ENCODE measurements at regions of chr9 and their contacts with region 1.

Region 1: DNA sequence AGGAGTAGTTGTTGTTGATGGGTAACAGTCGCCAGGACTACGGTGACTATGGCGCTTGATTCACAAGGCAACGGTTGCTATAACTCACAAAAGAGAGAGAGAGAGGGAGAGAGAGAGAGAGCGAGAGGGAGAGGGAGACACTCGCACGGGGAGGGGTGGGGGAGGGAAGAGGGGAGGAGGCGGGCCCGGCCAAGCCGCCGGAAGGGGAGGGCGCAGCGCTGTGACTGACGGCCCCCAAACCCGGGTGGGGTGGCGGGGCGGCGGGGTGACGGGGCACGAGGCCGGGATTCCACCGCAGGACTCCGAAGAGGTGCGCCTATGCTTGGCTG is at the start of gene RFX3:
- DNase-seq: peak; percentile 91 to 95 (median 95)
- H3K4me3 ChIP-seq: peak within 1 kb of the TSS; percentile 70 to 93
- H3K4me3 Mint-ChIP-seq: peak within 1 kb of the TSS; percentile 89 to 97 (median 94)
- H3K27ac ChIP-seq: peak within 1 kb of the TSS; percentile 100
- H3K27ac Mint-ChIP-seq: peak within 1 kb of the TSS; percentile 95 to 100 (median 98)
- H3K4me1 ChIP-seq: peaks cover 65% of the 10 kb centered on the region
- H3K4me1 Mint-ChIP-seq: peaks cover 41 to 76% (median 54%) of the 10 kb centered on the region in 4 donors
- H3K27me3 ChIP-seq: no peaks in the 10 kb centered on the region
- H3K27me3 Mint-ChIP-seq: peaks cover 1 to 7% of the 10 kb centered on the region in 2 donors
- total RNA-seq, gene RFX3: 25.9 to 30.8 TPM

Region 2: GRCh38 chr9:2014696-2015580 is 1510.9 kb before region 1 on chr9 and contains the start of gene SMARCA2:
- CTCF ChIA-PET with region 1: no interaction called
- POLR2A ChIA-PET with region 1: interaction called, 26 read pairs
- intact Hi-C with region 1: loop called (anchors 5 kb)
- DNase-seq: peak; percentile 97 to 98 (median 98)
- H3K4me3 ChIP-seq: peak within 1 kb of the TSS; percentile 84 to 98
- H3K4me3 Mint-ChIP-seq: peak within 1 kb of the TSS; percentile 95 to 100 (median 99)
- H3K27ac ChIP-seq: peak within 1 kb of the TSS; percentile 92
- H3K27ac Mint-ChIP-seq: peak within 1 kb of the TSS; percentile 96 to 100 (median 99)
- H3K4me1 ChIP-seq: peaks cover 29% of the 10 kb centered on the region
- H3K4me1 Mint-ChIP-seq: peaks cover 15 to 40% (median 24%) of the 10 kb centered on the region in 4 donors
- H3K27me3 ChIP-seq: no peaks in the 10 kb centered on the region
- H3K27me3 Mint-ChIP-seq: peaks cover 0 to 3% of the 10 kb centered on the region in 2 donors
- total RNA-seq, gene SMARCA2: 227 to 245 TPM

Region 3: GRCh38 chr9:3467593-3468219 is 58.1 kb before region 1 on chr9:
- CTCF ChIA-PET with region 1: interaction called, 5 read pairs
- POLR2A ChIA-PET with region 1: interaction called, 36 read pairs
- intact Hi-C with region 1: loop called (anchors 1 kb)
- DNase-seq: peak; percentile 51 to 70 (median 61)
- H3K4me3 ChIP-seq: no peak overlapping the region
- H3K4me3 Mint-ChIP-seq: peak overlapping the region in 2 of 8 donors; percentile 36 to 41
- H3K27ac ChIP-seq: no peak overlapping the region
- H3K27ac Mint-ChIP-seq: peak overlapping the region in 2 of 7 donors; percentile 27 to 29
- H3K4me1 ChIP-seq: peaks cover 5% of the 10 kb centered on the region
- H3K4me1 Mint-ChIP-seq: peaks cover 4 to 8% (median 5%) of the 10 kb centered on the region in 4 donors
- H3K27me3 ChIP-seq: no peaks in the 10 kb centered on the region
- H3K27me3 Mint-ChIP-seq: no peaks in the 10 kb centered on the region

Region 4: GRCh38 chr9:3508521-3509291 is 17.1 kb before region 1 on chr9:
- CTCF ChIA-PET with region 1: no interaction called
- POLR2A ChIA-PET with region 1: interaction called, 12 read pairs
- intact Hi-C with region 1: loop called (anchors 2 kb)
- DNase-seq: no peak
- H3K4me3 ChIP-seq: no peak overlapping the region
- H3K4me3 Mint-ChIP-seq: peak overlapping the region in 6 of 8 donors; percentile 14 to 55 (median 38)
- H3K27ac ChIP-seq: no peak overlapping the region
- H3K27ac Mint-ChIP-seq: peak overlapping the region in 6 of 7 donors; percentile 0 to 43 (median 24)
- H3K4me1 ChIP-seq: peaks cover 10% of the 10 kb centered on the region
- H3K4me1 Mint-ChIP-seq: peaks cover 31 to 45% (median 36%) of the 10 kb centered on the region in 4 donors
- H3K27me3 ChIP-seq: no peaks in the 10 kb centered on the region
- H3K27me3 Mint-ChIP-seq: no peaks in the 10 kb centered on the region

Region 5: GRCh38 chr9:3732077-3733038 is 206.6 kb after region 1 on chr9:
- CTCF ChIA-PET with region 1: no interaction called
- POLR2A ChIA-PET with region 1: interaction called, 5 read pairs
- intact Hi-C with region 1: loop called (anchors 5 kb)
- DNase-seq: peak in 4 of 5 donors; percentile 38 to 43 (median 39)
- H3K4me3 ChIP-seq: no peak overlapping the region
- H3K4me3 Mint-ChIP-seq: peak overlapping the region in 6 of 8 donors; percentile 3 to 72 (median 42)
- H3K27ac ChIP-seq: no peak overlapping the region
- H3K27ac Mint-ChIP-seq: peak overlapping the region in 4 of 7 donors; percentile 49 to 76 (median 55)
- H3K4me1 ChIP-seq: peaks cover 10% of the 10 kb centered on the region
- H3K4me1 Mint-ChIP-seq: peaks cover 5 to 13% (median 12%) of the 10 kb centered on the region in 4 donors
- H3K27me3 ChIP-seq: no peaks in the 10 kb centered on the region
- H3K27me3 Mint-ChIP-seq: no peaks in the 10 kb centered on the region

Region 6: GRCh38 chr9:4679268-4680172 is 1153.7 kb after region 1 on chr9 and contains the start of gene CDC37L1:
- CTCF ChIA-PET with region 1: no interaction called
- POLR2A ChIA-PET with region 1: interaction called, 15 read pairs
- intact Hi-C with region 1: loop called (anchors 5 kb)
- DNase-seq: peak; percentile 97 to 99 (median 99)
- H3K4me3 ChIP-seq: peak within 1 kb of the TSS; percentile 72 to 80
- H3K4me3 Mint-ChIP-seq: no peak within 1 kb of the TSS
- H3K27ac ChIP-seq: peak within 1 kb of the TSS; percentile 94
- H3K27ac Mint-ChIP-seq: no peak within 1 kb of the TSS
- H3K4me1 ChIP-seq: peaks cover 36% of the 10 kb centered on the region
- H3K4me1 Mint-ChIP-seq: peaks cover 11 to 16% (median 11%) of the 10 kb centered on the region in 4 donors
- H3K27me3 ChIP-seq: no peaks in the 10 kb centered on the region
- H3K27me3 Mint-ChIP-seq: no peaks in the 10 kb centered on the region
- total RNA-seq, gene CDC37L1: 27.2 to 27.8 TPM

Region 7: DNA sequence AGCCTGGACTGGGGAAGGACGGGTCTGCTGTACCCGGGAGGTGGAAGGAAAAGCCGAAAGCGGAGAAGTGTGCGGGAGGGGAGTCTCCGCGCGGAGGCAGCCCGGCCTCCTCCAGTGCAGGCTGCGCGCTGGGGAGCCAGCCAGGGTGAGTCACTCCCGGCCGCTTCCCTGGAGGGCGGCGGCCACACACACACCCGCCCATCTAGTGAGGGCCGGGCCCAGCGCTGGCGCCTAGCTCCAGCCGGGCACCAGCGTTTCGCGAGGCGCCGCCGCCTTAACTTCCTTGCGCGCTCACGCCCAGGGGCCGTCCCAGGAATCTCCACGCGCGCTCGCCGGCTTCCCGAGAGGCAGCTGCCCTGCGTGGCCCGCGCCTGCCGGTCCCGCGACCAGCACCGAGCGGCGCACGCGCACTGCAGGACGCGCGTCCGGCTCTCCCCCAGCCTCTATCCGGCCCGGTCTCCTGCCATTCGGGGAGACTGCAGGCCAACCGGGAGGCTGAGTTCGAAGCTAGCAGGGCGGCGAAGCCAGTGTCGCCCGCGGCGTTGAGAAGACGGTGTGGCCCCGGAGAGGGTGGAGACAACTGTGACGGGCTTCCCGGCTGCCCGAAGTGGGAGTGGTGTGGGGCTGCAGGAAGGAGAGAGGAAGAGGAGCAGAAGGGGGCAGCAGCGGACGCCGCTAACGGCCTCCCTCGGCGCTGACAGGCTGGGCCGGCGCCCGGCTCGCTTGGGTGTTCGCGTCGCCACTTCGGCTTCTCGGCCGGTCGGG is 1459.0 kb after region 1 on chr9 and contains the start of gene JAK2:
- CTCF ChIA-PET with region 1: no interaction called
- POLR2A ChIA-PET with region 1: interaction called, 6 read pairs
- intact Hi-C with region 1: loop called (anchors 10 kb)
- DNase-seq: peak; percentile 82 to 87 (median 83)
- H3K4me3 ChIP-seq: peak within 1 kb of the TSS; percentile 53
- H3K4me3 Mint-ChIP-seq: peak within 1 kb of the TSS; percentile 90 to 97 (median 96)
- H3K27ac ChIP-seq: peak within 1 kb of the TSS; percentile 73
- H3K27ac Mint-ChIP-seq: peak within 1 kb of the TSS; percentile 83 to 97 (median 94)
- H3K4me1 ChIP-seq: peaks cover 45% of the 10 kb centered on the region
- H3K4me1 Mint-ChIP-seq: peaks cover 15 to 30% (median 24%) of the 10 kb centered on the region in 4 donors
- H3K27me3 ChIP-seq: no peaks in the 10 kb centered on the region
- H3K27me3 Mint-ChIP-seq: no peaks in the 10 kb centered on the region
- total RNA-seq, gene JAK2: 17.0 to 19.9 TPM